ENCODE measurements at regions of chr16 and their contacts with region 1.

Region 1: DNA sequence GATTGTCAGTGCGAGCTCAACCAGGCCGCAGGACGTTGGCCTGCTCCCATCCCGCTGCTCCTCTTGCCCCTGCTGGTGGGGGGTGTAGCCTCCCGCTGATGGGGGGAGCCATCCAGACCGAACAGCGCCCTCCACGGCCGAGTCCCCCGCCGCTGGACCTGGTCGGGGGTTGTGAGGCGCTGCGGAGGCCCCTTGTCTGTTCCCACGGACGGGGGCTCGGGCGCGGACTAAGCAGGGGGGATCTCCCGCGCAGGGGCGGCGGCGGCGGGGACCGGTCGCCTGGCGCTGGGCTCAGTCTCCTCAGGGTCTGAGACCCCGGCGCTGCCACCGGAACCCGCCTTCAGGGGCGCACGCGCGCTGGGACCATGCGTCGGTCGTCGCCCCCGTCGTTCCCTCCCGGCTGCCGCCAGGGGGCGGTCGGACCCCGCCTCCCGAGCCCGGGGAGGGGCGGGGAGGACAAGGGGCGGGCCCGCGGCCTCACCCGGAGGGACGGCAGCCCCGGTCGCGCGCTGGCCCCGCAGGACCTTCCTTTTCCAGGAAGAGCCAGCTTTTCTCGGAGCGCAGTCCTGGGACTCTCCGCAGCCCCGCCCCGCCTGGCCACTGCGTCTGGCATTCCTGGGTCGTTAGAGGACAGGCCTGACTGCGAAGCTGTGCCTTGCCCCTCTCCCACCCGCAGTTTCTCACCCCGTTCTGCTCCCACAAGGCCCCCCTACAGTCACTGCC is 6.3 kb upstream of the IL32 start:
- DNase-seq: peak; percentile 99
- H3K4me3 ChIP-seq: peak overlapping the region; percentile 70 to 87
- H3K27ac ChIP-seq: peak overlapping the region; percentile 53 to 72
- H3K4me1 ChIP-seq: peaks cover 0 to 12% of the 10 kb centered on the region in 2 experiments; a peak in 1 of 4 replicates
- H3K27me3 ChIP-seq: no peaks in the 10 kb centered on the region
- CTCF ChIP-seq: peak; percentile 63
- EP300 ChIP-seq: no peak
- RAD21 ChIP-seq: peak; percentile 81

Region 2: GRCh38 chr16:3036235-3036725 is 22.9 kb before region 1 on chr16:
- CTCF ChIA-PET with region 1: interaction called, 63 read pairs
- POLR2A ChIA-PET with region 1: no interaction called
- DNase-seq: no peak
- H3K4me3 ChIP-seq: no peak overlapping the region
- H3K27ac ChIP-seq: no peak overlapping the region
- H3K4me1 ChIP-seq: no peaks in the 10 kb centered on the region
- H3K27me3 ChIP-seq: peaks cover 95% of the 10 kb centered on the region
- CTCF ChIP-seq: no peak
- EP300 ChIP-seq: no peak
- RAD21 ChIP-seq: no peak

Region 3: DNA sequence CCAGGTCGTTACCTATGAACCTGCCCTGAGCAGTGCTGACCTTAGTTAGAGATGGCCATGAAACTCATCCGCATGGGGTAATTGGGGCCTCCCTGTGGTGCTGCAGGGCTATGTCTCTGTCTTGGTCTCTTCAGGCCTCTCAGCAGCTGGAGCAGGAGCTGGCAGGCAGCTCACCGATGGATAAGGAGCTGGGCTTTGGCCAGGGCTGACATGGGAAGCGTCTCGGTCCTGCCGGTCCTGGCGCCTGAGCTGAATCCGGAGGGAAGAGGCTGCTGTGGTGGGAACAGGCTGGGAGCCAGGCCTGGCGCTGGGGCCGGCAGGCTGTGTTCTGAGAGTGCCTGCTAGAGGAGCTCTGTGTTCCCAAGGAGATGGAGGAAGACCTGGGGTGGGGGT is 16.4 kb after region 1 on chr16:
- CTCF ChIA-PET with region 1: interaction called, 12 read pairs
- POLR2A ChIA-PET with region 1: interaction called, 3 read pairs
- DNase-seq: no peak
- H3K4me3 ChIP-seq: no peak overlapping the region
- H3K27ac ChIP-seq: no peak overlapping the region
- H3K4me1 ChIP-seq: no peaks in the 10 kb centered on the region
- H3K27me3 ChIP-seq: peaks cover 52% of the 10 kb centered on the region
- CTCF ChIP-seq: no peak
- EP300 ChIP-seq: no peak
- RAD21 ChIP-seq: no peak

Region 4: DNA sequence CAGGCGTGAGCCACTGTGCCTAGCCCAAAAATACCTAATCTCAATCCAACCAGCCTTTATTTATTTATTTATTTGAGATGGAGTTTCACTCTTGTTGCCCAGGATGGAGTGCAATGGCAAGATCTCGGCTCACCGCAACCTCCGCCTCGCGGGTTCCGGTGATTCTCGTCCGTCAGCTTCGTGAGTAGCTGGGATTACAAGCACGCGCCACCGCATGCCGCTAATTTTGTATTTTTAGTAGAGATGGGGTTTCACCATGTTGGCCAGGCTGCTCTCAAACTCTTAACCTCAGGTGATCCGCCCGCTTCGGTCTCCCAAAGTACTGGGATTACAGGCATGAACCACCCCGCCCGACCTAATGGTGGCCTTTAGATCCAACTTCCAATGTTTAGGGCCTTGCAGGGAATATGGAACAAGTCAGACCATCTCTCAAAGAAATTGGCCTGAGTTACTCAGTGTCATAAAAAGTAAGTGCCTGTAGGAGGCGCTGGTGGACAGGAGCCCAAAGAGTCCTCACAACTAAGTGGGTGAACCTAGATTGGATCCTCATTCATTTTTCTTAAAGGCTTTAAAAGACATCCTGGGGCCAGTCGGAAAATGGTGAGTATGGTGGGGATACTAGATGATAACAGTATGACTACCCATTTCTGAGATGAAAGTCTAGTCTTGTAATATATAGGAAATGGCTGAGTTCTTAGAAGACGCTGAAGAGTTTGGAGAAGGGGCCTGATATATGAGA is 35.3 kb after region 1 on chr16:
- CTCF ChIA-PET with region 1: interaction called, 34 read pairs
- POLR2A ChIA-PET with region 1: no interaction called
- DNase-seq: peak; percentile 59
- H3K4me3 ChIP-seq: no peak overlapping the region; a peak in 1 of 4 replicates
- H3K27ac ChIP-seq: no peak overlapping the region
- H3K4me1 ChIP-seq: peaks cover 0 to under 1% of the 10 kb centered on the region in 2 experiments; a peak in 2 of 4 replicates
- H3K27me3 ChIP-seq: peaks cover 38% of the 10 kb centered on the region
- CTCF ChIP-seq: peak; percentile 62
- EP300 ChIP-seq: no peak
- RAD21 ChIP-seq: peak; percentile 52

Region 5: DNA sequence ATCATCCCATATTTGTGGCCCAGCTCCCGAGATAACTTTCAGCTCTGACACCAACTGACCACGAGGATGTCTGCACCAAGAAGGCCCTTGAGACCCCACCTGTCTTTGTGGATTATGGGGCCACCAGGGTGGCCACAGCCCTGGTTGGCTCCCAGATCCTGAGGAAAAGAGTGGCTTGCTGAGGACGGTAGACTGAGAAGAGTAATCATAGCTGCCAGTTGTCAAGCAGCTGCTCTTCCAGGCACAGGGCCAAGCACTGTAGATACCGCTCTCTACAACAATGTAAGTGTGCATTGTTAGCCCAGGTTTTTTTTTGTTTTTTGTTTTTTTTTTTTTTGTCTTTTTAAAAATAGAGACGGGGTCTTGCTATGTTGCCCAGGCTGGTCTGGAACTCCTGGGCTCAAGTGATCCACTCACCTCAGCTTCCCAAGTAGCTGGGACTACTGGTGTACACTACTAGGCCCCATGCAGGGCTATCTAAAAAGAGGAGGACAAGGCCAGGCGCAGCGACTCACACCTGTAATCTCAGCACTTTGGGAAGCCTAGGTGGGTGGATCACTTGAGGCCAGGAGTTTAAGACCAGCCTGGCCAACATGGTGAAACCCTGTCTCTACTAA is 62.8 kb after region 1 on chr16:
- CTCF ChIA-PET with region 1: interaction called, 56 read pairs
- POLR2A ChIA-PET with region 1: no interaction called
- DNase-seq: no peak
- H3K4me3 ChIP-seq: no peak overlapping the region
- H3K27ac ChIP-seq: no peak overlapping the region
- H3K4me1 ChIP-seq: peaks cover 4% of the 10 kb centered on the region in 2 experiments; a peak in 1 of 4 replicates
- H3K27me3 ChIP-seq: no peaks in the 10 kb centered on the region
- CTCF ChIP-seq: no peak
- EP300 ChIP-seq: no peak
- RAD21 ChIP-seq: no peak

Region 6: GRCh38 chr16:3134564-3135417 is 75.6 kb after region 1 on chr16 and contains the start of gene ZNF213:
- CTCF ChIA-PET with region 1: interaction called, 56 read pairs
- POLR2A ChIA-PET with region 1: no interaction called
- DNase-seq: peak; percentile 94
- H3K4me3 ChIP-seq: peak within 1 kb of the TSS; percentile 96 to 97
- H3K27ac ChIP-seq: peak within 1 kb of the TSS; percentile 77 to 88
- H3K4me1 ChIP-seq: peaks cover 2 to 8% of the 10 kb centered on the region in 2 experiments; a peak in 3 of 4 replicates
- H3K27me3 ChIP-seq: no peaks in the 10 kb centered on the region
- CTCF ChIP-seq: no peak
- EP300 ChIP-seq: no peak
- RAD21 ChIP-seq: no peak
- polyA plus RNA-seq, gene ZNF213: 0.83 and 1.1 TPM in 2 replicates

Region 7: DNA sequence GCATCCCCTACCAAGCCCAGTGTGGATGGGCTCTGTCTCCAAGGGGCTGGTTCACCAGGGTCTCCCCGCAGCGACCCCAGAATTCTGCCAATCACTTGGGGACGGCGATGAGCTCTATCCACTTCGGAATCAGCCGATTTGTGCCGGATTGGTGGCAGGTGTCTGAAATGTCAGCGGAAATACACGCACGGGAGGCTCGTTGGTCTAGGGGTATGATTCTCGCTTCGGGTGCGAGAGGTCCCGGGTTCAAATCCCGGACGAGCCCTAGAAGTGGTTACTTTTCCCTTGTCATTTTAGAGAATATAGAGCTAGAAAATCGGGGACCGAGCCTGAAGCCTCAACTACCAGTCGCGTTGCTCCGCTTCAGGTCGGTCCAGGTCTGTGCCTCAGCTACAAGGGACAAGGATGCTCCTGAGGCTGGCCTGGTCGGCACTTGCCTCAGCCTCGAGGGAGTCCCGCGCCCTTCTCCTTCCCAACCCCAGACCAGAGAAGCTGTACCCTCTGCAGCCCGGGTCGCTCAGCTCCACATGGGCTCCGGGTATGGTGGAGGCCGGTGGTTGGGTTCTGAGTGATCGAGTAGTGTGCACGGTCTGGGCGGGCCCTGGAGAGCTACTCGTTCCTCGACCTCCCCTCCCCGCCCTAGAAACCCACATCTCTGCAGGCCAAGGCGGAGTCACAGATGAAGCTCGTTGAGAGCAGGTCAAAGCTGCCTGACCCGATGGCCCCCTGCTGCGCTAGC is 112.9 kb after region 1 on chr16:
- CTCF ChIA-PET with region 1: interaction called, 15 read pairs
- POLR2A ChIA-PET with region 1: no interaction called
- DNase-seq: peak; percentile 51
- H3K4me3 ChIP-seq: no peak overlapping the region; a peak in 1 of 4 replicates
- H3K27ac ChIP-seq: no peak overlapping the region
- H3K4me1 ChIP-seq: peaks cover 0 to 5% of the 10 kb centered on the region in 2 experiments; a peak in 1 of 4 replicates
- H3K27me3 ChIP-seq: peaks cover 85% of the 10 kb centered on the region
- CTCF ChIP-seq: no peak
- EP300 ChIP-seq: no peak
- RAD21 ChIP-seq: no peak